ENCODE measurements at regions of chr3 and their contacts with region 1.

Region 1: DNA sequence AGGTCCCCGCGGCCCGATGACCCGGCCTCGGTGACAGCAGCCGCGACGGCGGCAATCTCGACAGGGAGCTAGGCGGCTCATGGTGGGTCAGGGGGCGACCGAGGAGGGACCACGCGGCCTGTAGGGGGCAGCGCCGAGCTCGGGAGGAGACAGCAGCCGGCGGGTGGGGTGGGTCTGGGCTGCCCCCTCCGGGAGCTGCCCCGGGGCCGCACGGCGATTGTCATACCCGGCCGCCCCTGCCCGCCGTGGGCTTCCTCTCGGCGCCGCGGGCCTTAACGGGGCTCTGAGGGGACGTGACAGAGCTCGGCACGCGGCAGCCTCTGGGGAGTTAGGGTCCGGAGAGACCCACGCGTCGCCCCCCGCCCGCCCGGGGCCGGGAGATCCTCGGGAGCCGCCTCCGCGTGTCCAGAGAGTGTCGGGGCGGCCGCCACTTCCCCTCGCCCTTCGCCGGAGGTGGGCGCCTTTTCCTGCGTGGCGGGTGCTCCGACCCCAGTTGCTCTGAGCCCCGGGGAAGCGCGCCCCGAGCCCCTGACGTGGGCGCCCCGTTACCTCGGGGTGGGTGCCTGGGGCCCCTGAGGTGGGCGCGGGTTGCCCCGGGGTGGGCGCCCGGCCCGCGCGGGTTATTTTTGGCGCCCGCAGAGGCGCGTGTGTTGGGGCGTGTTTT is 539 bp upstream of the PLCL2 start:
- DNase-seq: peak; percentile 80
- H3K4me3 Mint-ChIP-seq: peak overlapping the region; percentile 86
- H3K27ac Mint-ChIP-seq: peak overlapping the region; percentile 95
- H3K4me1 Mint-ChIP-seq: peaks cover 14% of the 10 kb centered on the region
- H3K27me3 Mint-ChIP-seq: no peaks in the 10 kb centered on the region

Region 2: DNA sequence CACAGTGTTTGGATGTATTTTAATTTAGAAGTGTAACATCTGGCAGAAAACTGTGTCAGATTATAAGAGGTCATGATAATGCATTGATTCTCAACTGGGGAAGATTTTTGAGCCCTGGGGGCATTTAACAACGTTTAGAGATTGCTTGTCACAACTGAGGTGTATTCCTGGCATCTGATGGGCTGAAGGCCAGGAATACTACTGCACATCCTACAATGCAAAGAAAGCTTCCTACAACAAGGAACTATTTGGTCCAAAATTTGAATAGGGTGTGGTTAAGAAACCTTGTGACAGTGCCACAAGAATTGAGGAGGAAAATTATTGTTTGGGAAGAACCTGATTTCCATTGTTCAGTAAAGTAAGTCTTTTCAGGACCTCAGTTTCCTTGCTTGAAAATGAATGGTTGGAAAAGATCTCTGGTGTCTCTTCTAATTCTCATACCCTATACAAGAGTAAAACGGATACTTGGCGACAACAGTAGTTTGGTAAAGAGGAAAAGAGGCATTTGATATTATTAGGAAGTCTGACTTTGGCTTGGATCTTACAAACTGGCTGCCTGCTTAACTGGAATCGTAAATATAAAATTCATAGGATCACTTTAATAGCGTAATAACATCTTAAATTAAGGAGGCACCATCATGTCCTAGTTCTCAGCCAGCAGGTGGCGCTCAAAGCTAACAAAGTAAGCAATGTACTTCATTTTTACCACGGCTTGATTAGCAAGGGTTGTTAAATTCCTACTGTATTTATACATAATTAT is 283.3 kb before region 1 on chr3:
- CTCF ChIA-PET with region 1: interaction called, 10 read pairs
- intact Hi-C with region 1: loop called (anchors 2 kb)
- DNase-seq: peak; percentile 90
- H3K4me3 Mint-ChIP-seq: no peak overlapping the region
- H3K27ac Mint-ChIP-seq: no peak overlapping the region
- H3K4me1 Mint-ChIP-seq: peaks cover 19% of the 10 kb centered on the region
- H3K27me3 Mint-ChIP-seq: no peaks in the 10 kb centered on the region

Region 3: GRCh38 chr3:16897254-16897926 is 13.2 kb after region 1 on chr3:
- CTCF ChIA-PET with region 1: interaction called, 9 read pairs
- intact Hi-C with region 1: loop called (anchors 1 kb)
- DNase-seq: peak; percentile 80
- H3K4me3 Mint-ChIP-seq: peak overlapping the region; percentile 48
- H3K27ac Mint-ChIP-seq: peak overlapping the region; percentile 77
- H3K4me1 Mint-ChIP-seq: peaks cover 82% of the 10 kb centered on the region
- H3K27me3 Mint-ChIP-seq: no peaks in the 10 kb centered on the region

Region 4: GRCh38 chr3:16993227-16993626 is 109.0 kb after region 1 on chr3:
- CTCF ChIA-PET with region 1: no interaction called
- intact Hi-C with region 1: no loop called
- DNase-seq: no peak
- H3K4me3 Mint-ChIP-seq: no peak overlapping the region
- H3K27ac Mint-ChIP-seq: no peak overlapping the region
- H3K4me1 Mint-ChIP-seq: peaks cover 77% of the 10 kb centered on the region
- H3K27me3 Mint-ChIP-seq: no peaks in the 10 kb centered on the region

Region 5: GRCh38 chr3:17023006-17023664 is 138.9 kb after region 1 on chr3:
- CTCF ChIA-PET with region 1: interaction called, 10 read pairs
- intact Hi-C with region 1: loop called (anchors 1 kb)
- DNase-seq: peak; percentile 82
- H3K4me3 Mint-ChIP-seq: peak overlapping the region; percentile 60
- H3K27ac Mint-ChIP-seq: peak overlapping the region; percentile 90
- H3K4me1 Mint-ChIP-seq: peaks cover 73% of the 10 kb centered on the region
- H3K27me3 Mint-ChIP-seq: no peaks in the 10 kb centered on the region

Region 6: GRCh38 chr3:17233398-17233800 is 349.2 kb after region 1 on chr3:
- CTCF ChIA-PET with region 1: interaction called, 3 read pairs
- intact Hi-C with region 1: loop called (anchors 1 kb)
- DNase-seq: peak; percentile 51
- H3K4me3 Mint-ChIP-seq: no peak overlapping the region
- H3K27ac Mint-ChIP-seq: no peak overlapping the region
- H3K4me1 Mint-ChIP-seq: peaks cover 20% of the 10 kb centered on the region
- H3K27me3 Mint-ChIP-seq: no peaks in the 10 kb centered on the region

Region 7: GRCh38 chr3:18444595-18445400 is 1560.6 kb after region 1 on chr3:
- CTCF ChIA-PET with region 1: no interaction called
- intact Hi-C with region 1: loop called (anchors 2 kb)
- DNase-seq: peak; percentile 83
- H3K4me3 Mint-ChIP-seq: peak overlapping the region; percentile 94
- H3K27ac Mint-ChIP-seq: peak overlapping the region; percentile 97
- H3K4me1 Mint-ChIP-seq: peaks cover 36% of the 10 kb centered on the region
- H3K27me3 Mint-ChIP-seq: no peaks in the 10 kb centered on the region

Measured in activated naive CD4-positive, alpha-beta T cell treated with anti-CD3 and anti-CD28 coated beads for 36 hours (primary cell).